ENCODE measurements at regions of chr4 and their contacts with region 1.

Region 1: GRCh38 chr4:108393890-108394472 is 225.2 kb upstream of the LEF1 start:
- DNase-seq: peak in 1 of 2 experiments; percentile 8
- H3K4me3 ChIP-seq: no peak overlapping the region
- H3K4me3 Mint-ChIP-seq: no peak overlapping the region
- H3K27ac Mint-ChIP-seq: no peak overlapping the region
- H3K4me1 ChIP-seq: no peaks in the 10 kb centered on the region
- H3K4me1 Mint-ChIP-seq: no peaks in the 10 kb centered on the region
- H3K27me3 ChIP-seq: no peaks in the 10 kb centered on the region
- H3K27me3 Mint-ChIP-seq: no peaks in the 10 kb centered on the region
- CTCF ChIP-seq: peak in 1 of 2 experiments; percentile 4

Region 2: DNA sequence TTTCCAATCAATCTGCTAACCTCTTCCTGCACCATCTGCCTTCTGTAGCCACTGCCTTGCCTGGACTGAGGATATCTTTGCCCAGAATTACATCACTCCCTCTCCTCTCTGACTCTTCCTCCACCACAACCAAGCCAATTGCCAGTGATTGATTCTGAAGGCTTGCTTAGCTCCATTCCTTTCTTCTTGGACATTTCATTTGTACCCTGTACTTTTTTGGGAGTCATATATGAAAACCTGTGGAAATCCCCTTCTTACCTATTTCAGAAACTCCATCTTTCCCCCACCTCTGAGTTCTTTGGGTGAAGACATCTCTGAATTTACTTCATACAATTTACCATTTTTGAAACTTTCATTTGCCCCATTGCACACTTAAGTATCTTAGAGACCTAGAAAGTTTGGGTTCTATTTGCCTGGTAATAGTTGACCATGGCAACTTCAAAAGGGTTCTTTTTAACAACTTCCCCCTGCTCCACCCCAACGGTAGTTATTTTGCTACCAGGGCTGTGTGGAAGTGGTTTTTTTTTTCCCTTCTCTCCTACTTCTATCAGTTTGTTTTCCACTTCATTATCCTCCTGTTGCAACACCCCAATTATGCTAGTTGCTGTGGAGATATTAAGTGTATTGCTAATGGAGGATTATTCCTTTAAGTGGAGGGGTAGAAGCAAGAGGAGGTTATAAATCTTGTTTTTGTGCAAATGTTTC is 555.0 kb before region 1 on chr4:
- CTCF ChIA-PET with region 1: no interaction called
- POLR2A ChIA-PET with region 1: no interaction called
- intact Hi-C with region 1: no loop called
- DNase-seq: no peak
- H3K4me3 ChIP-seq: no peak overlapping the region
- H3K4me3 Mint-ChIP-seq: no peak overlapping the region
- H3K27ac Mint-ChIP-seq: no peak overlapping the region
- H3K4me1 ChIP-seq: no peaks in the 10 kb centered on the region
- H3K4me1 Mint-ChIP-seq: no peaks in the 10 kb centered on the region
- H3K27me3 ChIP-seq: no peaks in the 10 kb centered on the region
- H3K27me3 Mint-ChIP-seq: peaks cover 2% of the 10 kb centered on the region
- CTCF ChIP-seq: no peak

Region 3: DNA sequence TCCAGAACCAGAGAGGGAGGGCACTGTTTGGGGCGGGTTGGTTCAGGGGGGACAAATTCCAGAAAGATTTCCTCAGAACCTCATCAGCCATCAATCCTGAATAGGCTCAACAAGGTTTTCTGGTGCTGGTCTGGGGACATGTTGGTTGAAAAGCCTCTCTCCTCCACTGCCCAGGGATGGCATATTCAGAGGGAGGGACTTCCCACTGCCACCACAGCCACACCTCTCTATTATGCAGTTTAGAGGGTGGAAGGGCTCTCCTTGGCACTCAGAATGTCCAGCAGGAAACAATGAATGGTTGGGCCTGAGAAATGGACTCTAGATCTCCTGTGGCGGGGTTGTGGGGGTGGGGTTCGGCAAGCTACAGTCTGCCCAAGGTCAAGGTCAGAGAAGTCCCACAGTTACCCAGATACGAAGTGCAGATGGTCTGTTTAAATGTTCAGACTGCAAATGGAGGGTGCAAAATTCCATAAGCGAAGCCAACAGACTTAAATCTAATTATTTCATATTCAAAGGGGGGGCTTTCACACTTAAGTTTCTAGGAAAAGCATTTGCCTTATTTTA is 295.9 kb before region 1 on chr4:
- CTCF ChIA-PET with region 1: no interaction called
- POLR2A ChIA-PET with region 1: no interaction called
- intact Hi-C with region 1: no loop called
- DNase-seq: no peak
- H3K4me3 ChIP-seq: no peak overlapping the region
- H3K4me3 Mint-ChIP-seq: no peak overlapping the region
- H3K27ac Mint-ChIP-seq: no peak overlapping the region
- H3K4me1 ChIP-seq: no peaks in the 10 kb centered on the region
- H3K4me1 Mint-ChIP-seq: no peaks in the 10 kb centered on the region
- H3K27me3 ChIP-seq: no peaks in the 10 kb centered on the region
- H3K27me3 Mint-ChIP-seq: peaks cover 2% of the 10 kb centered on the region
- CTCF ChIP-seq: no peak

Region 4: GRCh38 chr4:108337923-108338322 is 56.1 kb before region 1 on chr4:
- CTCF ChIA-PET with region 1: no interaction called
- POLR2A ChIA-PET with region 1: no interaction called
- intact Hi-C with region 1: no loop called
- DNase-seq: no peak
- H3K4me3 ChIP-seq: no peak overlapping the region
- H3K4me3 Mint-ChIP-seq: no peak overlapping the region
- H3K27ac Mint-ChIP-seq: no peak overlapping the region
- H3K4me1 ChIP-seq: peaks cover 11% of the 10 kb centered on the region
- H3K4me1 Mint-ChIP-seq: no peaks in the 10 kb centered on the region
- H3K27me3 ChIP-seq: no peaks in the 10 kb centered on the region
- H3K27me3 Mint-ChIP-seq: no peaks in the 10 kb centered on the region
- CTCF ChIP-seq: no peak

Region 5: GRCh38 chr4:108466936-108467902 is 73.2 kb after region 1 on chr4:
- CTCF ChIA-PET with region 1: no interaction called
- POLR2A ChIA-PET with region 1: no interaction called
- intact Hi-C with region 1: no loop called
- DNase-seq: no peak
- H3K4me3 ChIP-seq: no peak overlapping the region
- H3K4me3 Mint-ChIP-seq: no peak overlapping the region
- H3K27ac Mint-ChIP-seq: no peak overlapping the region
- H3K4me1 ChIP-seq: no peaks in the 10 kb centered on the region
- H3K4me1 Mint-ChIP-seq: no peaks in the 10 kb centered on the region
- H3K27me3 ChIP-seq: no peaks in the 10 kb centered on the region
- H3K27me3 Mint-ChIP-seq: no peaks in the 10 kb centered on the region
- CTCF ChIP-seq: no peak

Region 6: GRCh38 chr4:108512615-108513505 is 118.9 kb after region 1 on chr4:
- CTCF ChIA-PET with region 1: no interaction called
- POLR2A ChIA-PET with region 1: no interaction called
- intact Hi-C with region 1: loop called (anchors 2 kb)
- DNase-seq: peak; percentile 63 to 65
- H3K4me3 ChIP-seq: no peak overlapping the region
- H3K4me3 Mint-ChIP-seq: peak overlapping the region; percentile 47
- H3K27ac Mint-ChIP-seq: no peak overlapping the region
- H3K4me1 ChIP-seq: no peaks in the 10 kb centered on the region
- H3K4me1 Mint-ChIP-seq: no peaks in the 10 kb centered on the region
- H3K27me3 ChIP-seq: no peaks in the 10 kb centered on the region
- H3K27me3 Mint-ChIP-seq: peaks cover 13% of the 10 kb centered on the region
- CTCF ChIP-seq: peak; percentile 35 to 58

Measured in Caco-2 (cell line).